ENCODE measurements at regions of chr16 and their contacts with region 1.

Region 1: DNA sequence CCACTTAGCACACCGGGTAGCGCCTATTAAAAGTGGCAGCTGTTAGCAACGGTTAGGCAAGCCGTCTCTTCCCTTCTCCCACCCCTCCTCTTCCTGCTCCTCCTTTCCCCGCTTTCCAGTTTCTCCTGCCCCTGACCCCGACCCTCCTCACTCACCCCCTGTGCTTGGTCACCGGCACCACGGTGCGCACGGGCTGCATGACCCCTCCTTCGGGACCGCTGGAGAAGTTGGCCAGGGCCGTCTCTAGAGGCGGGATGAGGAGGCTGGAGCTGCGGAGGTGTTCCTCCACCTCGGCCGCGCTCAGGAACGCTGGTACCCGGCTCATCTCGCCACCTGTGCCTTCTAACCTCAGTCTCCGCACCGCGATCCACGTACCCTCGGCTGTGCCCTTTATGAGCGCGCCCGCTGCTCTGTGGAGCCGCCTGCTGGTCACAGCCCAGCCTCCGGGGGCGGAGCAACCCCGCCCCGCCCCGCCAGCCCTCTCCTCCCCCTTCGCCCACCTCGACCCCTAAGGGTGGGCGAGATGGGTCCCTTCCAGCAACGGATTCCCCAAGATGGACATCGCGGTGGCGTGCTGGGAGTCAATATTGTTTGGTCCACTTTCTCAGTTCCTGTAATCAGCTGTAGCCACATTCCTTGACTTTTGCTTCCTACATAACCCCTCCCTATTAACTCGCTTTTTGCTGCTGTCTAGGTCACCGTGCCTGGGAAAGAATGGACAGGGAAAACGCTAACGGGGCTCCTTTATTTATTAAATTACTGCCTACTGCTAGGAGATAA is at the start of gene CRYM:
- DNase-seq: peak; percentile 66 to 86 (median 86)
- ATAC-seq: peak; percentile 99
- H3K4me3 ChIP-seq: peak within 1 kb of the TSS; percentile 36
- H3K27ac ChIP-seq: no peak within 1 kb of the TSS; the same call in 2 of the 3 replicates
- H3K4me1 ChIP-seq: peaks cover 5 to 15% of the 10 kb centered on the region in 2 experiments; a peak in 3 of 5 replicates
- H3K27me3 ChIP-seq: peaks cover 19 to 35% of the 10 kb centered on the region in 2 experiments
- CTCF ChIP-seq: peak; percentile 69 to 84 (median 78)
- EP300 ChIP-seq: no peak
- POLR2A ChIP-seq: no peak
- RAD21 ChIP-seq: peak; percentile 43 to 66
- polyA plus RNA-seq, gene CRYM: 0.08 to 0.15 TPM

Region 2: DNA sequence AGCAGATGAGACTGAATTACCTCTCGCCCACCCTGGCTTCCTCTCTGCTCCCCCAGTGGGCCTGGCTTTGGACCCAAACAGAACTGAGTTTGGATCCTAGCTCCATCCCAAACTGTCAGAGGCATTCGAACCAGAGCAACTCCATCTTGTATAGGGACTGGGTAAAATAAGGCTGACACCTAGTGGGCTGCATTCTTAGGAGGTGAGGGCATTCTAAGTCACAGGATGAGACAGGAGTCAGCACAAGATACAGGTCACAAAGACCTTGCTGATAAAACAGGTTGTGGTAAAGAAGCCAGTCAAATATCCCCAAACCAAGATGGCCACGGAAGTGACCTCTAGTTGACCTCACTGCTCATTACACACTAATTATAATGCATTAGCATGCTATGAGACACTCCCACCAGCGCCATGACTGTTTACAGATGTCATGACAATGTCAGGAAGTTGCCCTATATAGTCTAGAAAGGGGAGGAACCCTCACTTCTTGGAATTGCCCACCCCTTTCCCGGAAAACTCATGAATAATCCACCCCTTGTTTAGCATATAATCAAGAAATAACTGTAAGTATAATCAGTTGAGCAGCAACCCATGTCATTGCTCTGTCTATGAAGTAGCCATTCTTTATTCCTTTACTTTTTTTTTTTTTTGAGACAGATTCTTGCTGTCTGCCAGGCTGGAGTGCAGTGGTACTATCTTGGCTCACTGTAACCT is 333.1 kb before region 1 on chr16:
- CTCF ChIA-PET with region 1: no interaction called
- POLR2A ChIA-PET with region 1: no interaction called
- in situ Hi-C with region 1: no loop called
- intact Hi-C with region 1: no loop called
- DNase-seq: peak; percentile 35 to 83 (median 42)
- ATAC-seq: peak; percentile 91
- H3K4me3 ChIP-seq: no peak overlapping the region
- H3K27ac ChIP-seq: peak overlapping the region; percentile 81
- H3K4me1 ChIP-seq: peaks cover 12 to 24% of the 10 kb centered on the region in 2 experiments
- H3K27me3 ChIP-seq: 0 out of 5 replicates have a peak, but pooled peaks cover 0 to 2% of the 10 kb centered on the region in 2 experiments
- CTCF ChIP-seq: peak in 1 of 3 experiments; percentile 28; a peak in 1 of 6 replicates
- EP300 ChIP-seq: no peak; the same call in none of the 2 replicates
- POLR2A ChIP-seq: no peak
- RAD21 ChIP-seq: peak; percentile 78 to 80

Region 3: GRCh38 chr16:21184834-21185233 is 93.3 kb before region 1 on chr16:
- CTCF ChIA-PET with region 1: interaction called, 27 read pairs
- POLR2A ChIA-PET with region 1: interaction called, 6 read pairs
- in situ Hi-C with region 1: no loop called
- intact Hi-C with region 1: loop called (anchors 2 kb)
- DNase-seq: no peak
- ATAC-seq: no peak
- H3K4me3 ChIP-seq: no peak overlapping the region
- H3K27ac ChIP-seq: no peak overlapping the region
- H3K4me1 ChIP-seq: peaks cover 5 to 8% of the 10 kb centered on the region in 2 experiments; a peak in 3 of 5 replicates
- H3K27me3 ChIP-seq: no peaks in the 10 kb centered on the region
- CTCF ChIP-seq: no peak
- EP300 ChIP-seq: no peak
- POLR2A ChIP-seq: no peak
- RAD21 ChIP-seq: no peak

Region 4: GRCh38 chr16:21194771-21195301 is 83.3 kb before region 1 on chr16:
- CTCF ChIA-PET with region 1: interaction called, 27 read pairs
- POLR2A ChIA-PET with region 1: interaction called, 6 read pairs
- in situ Hi-C with region 1: loop called (anchors 5 kb)
- intact Hi-C with region 1: no loop called
- DNase-seq: no peak
- ATAC-seq: no peak
- H3K4me3 ChIP-seq: no peak overlapping the region
- H3K27ac ChIP-seq: no peak overlapping the region
- H3K4me1 ChIP-seq: no peaks in the 10 kb centered on the region
- H3K27me3 ChIP-seq: peaks cover 14 to 30% of the 10 kb centered on the region in 2 experiments; a peak in 4 of 5 replicates
- CTCF ChIP-seq: no peak
- EP300 ChIP-seq: no peak
- POLR2A ChIP-seq: no peak
- RAD21 ChIP-seq: no peak

Region 5: GRCh38 chr16:21226749-21227148 is 51.4 kb before region 1 on chr16:
- CTCF ChIA-PET with region 1: no interaction called
- POLR2A ChIA-PET with region 1: interaction called, 3 read pairs
- in situ Hi-C with region 1: no loop called
- intact Hi-C with region 1: loop called (anchors 5 kb)
- DNase-seq: no peak
- ATAC-seq: no peak
- H3K4me3 ChIP-seq: no peak overlapping the region
- H3K27ac ChIP-seq: no peak overlapping the region
- H3K4me1 ChIP-seq: peaks cover 3 to 7% of the 10 kb centered on the region in 2 experiments; a peak in 2 of 5 replicates
- H3K27me3 ChIP-seq: peaks cover 2 to 6% of the 10 kb centered on the region in 2 experiments; a peak in 4 of 5 replicates
- CTCF ChIP-seq: no peak
- EP300 ChIP-seq: no peak
- POLR2A ChIP-seq: no peak
- RAD21 ChIP-seq: no peak

Region 6: DNA sequence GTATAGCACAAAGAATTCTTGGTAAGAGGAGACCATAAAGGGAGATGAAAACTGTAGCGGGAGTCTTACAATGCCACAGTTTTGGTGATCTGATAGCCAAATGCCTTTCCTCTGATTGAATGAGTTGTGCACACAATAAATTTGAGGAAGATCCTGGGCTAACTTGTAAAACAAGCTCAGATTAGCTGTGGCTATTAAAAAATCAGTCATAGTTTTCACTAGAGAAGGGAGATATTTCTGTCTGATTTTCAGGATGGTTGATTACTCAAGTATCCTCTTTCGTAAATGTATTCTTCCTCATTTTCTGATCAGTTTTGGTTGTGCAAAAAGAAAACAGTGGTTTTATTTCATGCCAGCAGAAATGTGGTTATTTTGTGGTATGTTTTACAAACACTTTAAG is 312.2 kb after region 1 on chr16:
- CTCF ChIA-PET with region 1: no interaction called
- POLR2A ChIA-PET with region 1: no interaction called
- in situ Hi-C with region 1: no loop called
- intact Hi-C with region 1: no loop called
- DNase-seq: no peak
- ATAC-seq: no peak
- H3K4me3 ChIP-seq: no peak overlapping the region
- H3K27ac ChIP-seq: no peak overlapping the region
- H3K4me1 ChIP-seq: no peaks in the 10 kb centered on the region; a peak in 1 of 5 replicates
- H3K27me3 ChIP-seq: peaks cover 0 to 2% of the 10 kb centered on the region in 2 experiments; a peak in 2 of 5 replicates
- CTCF ChIP-seq: no peak
- EP300 ChIP-seq: no peak
- POLR2A ChIP-seq: no peak
- RAD21 ChIP-seq: no peak

Region 7: DNA sequence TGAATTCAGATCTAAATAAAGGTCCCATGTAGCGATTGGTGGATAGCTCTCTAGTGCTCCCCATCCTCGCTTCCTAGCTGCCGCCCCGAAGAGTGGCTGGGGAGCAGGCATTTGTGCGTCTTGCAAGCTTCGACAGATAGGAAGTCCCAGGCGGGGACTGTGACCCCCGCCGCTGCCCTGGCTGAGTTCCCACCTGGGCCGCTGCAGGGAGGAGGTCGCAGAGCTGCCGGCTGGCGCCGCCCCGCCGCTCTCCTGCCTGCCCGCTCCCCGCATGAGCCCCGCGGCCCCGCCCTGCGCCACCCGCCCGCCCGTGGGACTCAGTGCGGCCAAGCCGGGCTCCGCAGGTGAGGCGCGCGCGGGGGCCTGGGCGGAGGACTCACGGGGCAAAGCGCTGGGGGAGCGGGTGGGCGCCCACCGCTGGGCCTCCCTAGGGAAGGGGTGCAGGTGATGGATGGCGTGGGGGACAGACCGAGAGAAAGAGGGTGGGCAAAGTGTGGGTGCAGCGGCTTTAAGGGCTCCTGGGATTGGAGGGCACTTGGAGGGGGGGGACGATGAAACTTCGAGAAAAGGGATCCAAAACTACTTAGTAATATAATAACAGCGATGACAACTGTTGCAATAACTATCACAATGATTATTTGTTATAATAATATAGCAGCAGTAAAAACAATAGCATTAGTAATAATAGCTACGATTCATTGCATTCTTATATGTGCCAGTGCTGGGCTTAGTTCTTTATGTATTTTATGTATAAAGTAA is 386.0 kb after region 1 on chr16 and contains the start of gene OTOA:
- CTCF ChIA-PET with region 1: no interaction called
- POLR2A ChIA-PET with region 1: no interaction called
- in situ Hi-C with region 1: no loop called
- intact Hi-C with region 1: no loop called
- DNase-seq: peak in 1 of 4 experiments; percentile 24
- ATAC-seq: peak; percentile 71
- H3K4me3 ChIP-seq: no peak within 1 kb of the TSS
- H3K27ac ChIP-seq: no peak within 1 kb of the TSS
- H3K4me1 ChIP-seq: peaks cover 0 to 8% of the 10 kb centered on the region in 2 experiments; a peak in 3 of 5 replicates
- H3K27me3 ChIP-seq: peaks cover 3 to 10% of the 10 kb centered on the region in 2 experiments; a peak in 4 of 5 replicates
- CTCF ChIP-seq: no peak
- EP300 ChIP-seq: no peak
- POLR2A ChIP-seq: no peak
- RAD21 ChIP-seq: no peak
- polyA plus RNA-seq, gene OTOA: not detected